ENCODE measurements at regions of chr5 and their contacts with region 1.

Region 1: DNA sequence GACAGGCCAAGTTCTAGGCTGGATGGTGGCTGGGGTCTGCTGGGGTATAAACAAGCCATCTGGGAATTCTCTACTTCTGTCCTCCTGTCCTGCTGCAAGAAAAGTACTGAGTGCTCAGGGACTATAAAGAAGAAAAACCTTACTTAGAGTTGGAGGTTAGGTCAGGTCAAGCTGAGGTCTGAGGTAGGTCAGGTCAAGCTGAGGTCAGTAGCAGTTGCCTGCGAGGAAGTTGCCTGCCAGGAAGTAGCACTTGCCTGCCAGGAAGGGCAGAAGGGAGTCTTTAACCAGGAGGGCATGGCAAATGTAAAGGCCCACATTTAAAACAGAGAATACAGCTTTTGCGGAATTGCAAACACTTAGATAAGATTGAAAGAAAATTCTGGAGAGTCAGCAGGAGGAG is 51.3 kb upstream of the PRLR start:
- DNase-seq: no peak
- H3K4me3 ChIP-seq: no peak overlapping the region
- H3K27ac ChIP-seq: no peak overlapping the region
- H3K4me1 ChIP-seq: no peaks in the 10 kb centered on the region
- H3K27me3 ChIP-seq: no peaks in the 10 kb centered on the region
- CTCF ChIP-seq: no peak
- EP300 ChIP-seq: no peak
- POLR2A ChIP-seq: no peak

Region 2: GRCh38 chr5:35239911-35240609 is 41.6 kb before region 1 on chr5:
- in situ Hi-C with region 1: no loop called
- intact Hi-C with region 1: loop called (anchors 1 kb)
- DNase-seq: no peak
- H3K4me3 ChIP-seq: no peak overlapping the region
- H3K27ac ChIP-seq: no peak overlapping the region
- H3K4me1 ChIP-seq: peaks cover 0 to 21% (median 4%) of the 10 kb centered on the region in 4 donors
- H3K27me3 ChIP-seq: no peaks in the 10 kb centered on the region
- CTCF ChIP-seq: no peak
- EP300 ChIP-seq: no peak
- POLR2A ChIP-seq: no peak